AG04449 (cell line): ENCODE measurements at regions of chr7 and their contacts with region 1.

Region 1: DNA sequence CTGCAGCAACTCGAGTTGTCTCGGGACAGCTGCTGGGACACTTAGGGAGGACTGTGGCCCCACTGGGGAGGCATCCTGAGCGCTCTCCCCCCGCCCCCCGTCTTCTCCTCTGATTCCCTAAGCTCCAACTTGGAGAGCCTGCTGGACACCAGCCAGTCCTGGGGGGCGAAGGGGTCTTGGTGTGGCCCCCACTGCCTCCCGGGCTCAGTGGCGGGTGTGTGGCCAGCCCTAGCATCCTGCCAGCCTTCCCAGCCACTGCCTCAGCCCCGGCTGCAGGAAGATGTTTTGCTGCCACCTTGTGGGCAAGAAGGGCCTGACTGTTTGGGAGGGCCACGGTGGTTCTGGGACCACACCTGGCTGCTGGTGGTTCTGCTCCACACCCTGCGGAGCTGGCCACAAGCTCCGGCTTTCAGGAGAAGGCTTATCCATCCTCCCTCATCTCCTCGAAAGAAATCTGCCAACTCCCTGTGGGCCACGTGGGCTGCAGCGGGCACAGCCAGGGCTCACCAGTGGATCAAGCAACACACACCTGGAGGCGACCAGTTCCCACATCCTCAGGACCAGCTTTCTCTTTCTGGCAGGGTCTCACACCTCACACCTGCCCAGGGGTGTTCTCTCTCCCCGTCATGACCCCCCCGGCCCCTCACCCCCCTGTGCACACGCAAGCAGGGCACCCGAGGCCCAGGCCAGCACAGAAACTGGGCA is 24.8 kb downstream of the AGAP3 start:
- DNase-seq: no peak
- H3K4me3 ChIP-seq: no peak overlapping the region
- CTCF ChIP-seq: peak; percentile 94

Region 2: DNA sequence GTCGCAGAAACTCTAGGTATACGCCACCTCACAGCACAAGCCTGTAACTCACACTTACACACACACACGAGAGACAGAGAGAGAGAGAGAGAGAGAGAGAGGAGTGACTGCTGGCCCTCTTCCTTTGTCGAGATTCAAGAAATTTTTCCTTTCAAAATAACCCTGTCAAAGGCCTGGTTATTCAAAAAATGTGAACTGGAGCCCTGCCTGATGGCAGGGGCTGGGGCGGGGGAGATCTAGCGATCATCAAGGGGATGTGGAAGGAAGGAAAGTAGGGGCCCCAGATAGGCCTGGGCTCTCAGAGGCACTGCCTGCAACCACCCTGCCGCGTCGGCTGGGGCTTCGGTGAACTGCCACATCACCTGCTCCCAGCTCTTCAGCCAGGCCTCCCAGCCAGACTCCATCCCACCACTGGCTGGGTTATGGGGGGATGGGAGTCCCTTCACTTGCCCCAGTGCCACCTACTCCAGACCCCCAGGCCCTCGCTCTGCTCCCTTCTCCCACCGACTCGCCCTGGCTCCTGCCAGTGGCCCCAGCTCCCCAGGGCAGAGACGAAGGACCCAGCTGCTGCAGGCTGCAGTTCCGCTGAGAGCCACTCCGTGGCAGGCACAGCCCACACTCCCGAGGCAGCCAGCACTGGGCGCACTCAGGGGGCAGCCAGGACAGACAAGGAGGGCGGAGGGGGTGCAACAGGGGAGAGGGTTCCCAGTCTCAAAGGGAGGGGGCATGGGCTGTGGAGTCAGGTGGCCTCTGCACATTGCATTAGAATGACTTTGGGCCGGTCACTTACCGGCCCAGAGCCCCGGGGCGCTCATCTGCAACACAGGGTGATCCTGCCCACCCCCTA is 148.3 kb before region 1 on chr7:
- CTCF ChIA-PET with region 1: interaction called, 87 read pairs
- POLR2A ChIA-PET with region 1: interaction called, 3 read pairs
- DNase-seq: no peak
- H3K4me3 ChIP-seq: no peak overlapping the region
- CTCF ChIP-seq: peak; percentile 97

Region 3: DNA sequence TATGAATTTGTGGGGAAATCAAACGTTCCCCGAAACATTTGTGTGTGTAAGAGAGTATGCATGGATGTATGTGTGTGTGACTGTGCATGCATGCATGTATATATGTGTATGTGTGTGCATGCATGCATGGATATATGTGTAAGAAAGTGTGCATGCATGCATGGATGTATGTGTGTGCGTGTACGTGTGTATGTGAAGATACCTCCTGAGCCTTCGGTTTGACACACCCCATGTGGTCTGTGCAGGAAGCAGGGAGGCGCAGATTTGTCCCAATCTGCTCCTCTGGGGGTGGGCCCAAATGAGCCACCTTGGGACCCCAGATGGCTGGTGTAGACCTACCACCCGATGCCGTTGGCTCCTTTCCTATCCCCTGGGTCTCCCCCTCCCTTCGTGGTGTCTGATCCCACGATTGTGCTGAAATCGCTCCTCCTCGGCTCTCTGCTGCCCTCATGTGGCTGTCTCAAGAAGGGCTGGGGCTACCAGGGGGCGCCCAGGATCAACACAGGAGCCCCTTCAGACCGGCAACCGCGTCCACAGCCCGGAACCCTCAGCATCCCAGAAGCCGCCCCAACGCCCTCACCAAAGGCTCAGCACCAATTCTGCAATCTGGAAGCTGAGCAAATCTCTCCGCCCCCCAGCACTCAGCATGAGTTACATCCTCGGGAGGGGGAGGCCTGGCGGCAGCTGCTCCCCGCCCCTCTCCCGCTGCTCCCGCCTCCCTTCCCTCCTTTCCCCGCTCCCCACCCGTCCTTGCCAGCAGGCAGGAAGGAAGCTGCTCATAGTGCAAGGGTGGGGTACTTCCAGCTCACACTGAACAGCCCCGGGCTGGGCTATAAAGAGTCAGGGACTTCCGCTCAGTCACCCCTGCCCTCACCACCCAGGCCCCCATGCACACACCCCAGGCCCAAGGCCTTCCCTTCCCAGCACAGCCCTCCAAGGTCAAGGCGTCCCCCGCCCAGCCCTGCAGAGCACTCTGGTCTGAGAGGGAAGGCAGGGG is 122.6 kb before region 1 on chr7:
- CTCF ChIA-PET with region 1: interaction called, 21 read pairs
- POLR2A ChIA-PET with region 1: no interaction called
- DNase-seq: no peak
- H3K4me3 ChIP-seq: no peak overlapping the region
- CTCF ChIP-seq: peak; percentile 72

Region 4: DNA sequence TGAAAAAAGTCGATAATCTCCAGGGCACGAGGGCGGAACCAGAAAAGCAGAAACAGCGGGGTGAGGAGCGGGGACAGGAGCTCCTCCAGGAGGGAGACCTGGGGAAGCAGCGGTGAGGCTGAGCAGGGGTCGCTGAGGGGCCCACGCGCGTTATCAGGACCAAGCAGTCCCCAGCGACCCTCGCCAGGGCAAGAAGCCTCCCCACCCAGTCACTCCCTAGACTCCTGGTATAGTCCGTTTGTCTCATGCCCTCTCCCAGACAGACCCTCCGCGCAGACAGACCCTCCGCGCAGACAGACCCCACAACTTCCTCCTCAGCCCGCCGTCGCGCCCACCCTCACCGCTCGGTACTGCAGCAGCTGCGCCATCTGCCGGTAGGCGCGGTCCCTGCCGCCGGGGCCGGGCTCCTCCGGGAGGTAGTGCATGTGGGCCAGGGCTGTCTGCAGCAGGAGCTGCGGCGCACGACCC is 93.1 kb before region 1 on chr7:
- CTCF ChIA-PET with region 1: interaction called, 190 read pairs
- POLR2A ChIA-PET with region 1: interaction called, 3 read pairs
- DNase-seq: no peak
- H3K4me3 ChIP-seq: peak overlapping the region; percentile 47
- CTCF ChIP-seq: peak; percentile 100

Region 5: GRCh38 chr7:151038951-151039849 is 71.9 kb before region 1 on chr7:
- CTCF ChIA-PET with region 1: interaction called, 15 read pairs
- POLR2A ChIA-PET with region 1: interaction called, 3 read pairs
- DNase-seq: no peak
- H3K4me3 ChIP-seq: no peak overlapping the region
- CTCF ChIP-seq: no peak

Region 6: DNA sequence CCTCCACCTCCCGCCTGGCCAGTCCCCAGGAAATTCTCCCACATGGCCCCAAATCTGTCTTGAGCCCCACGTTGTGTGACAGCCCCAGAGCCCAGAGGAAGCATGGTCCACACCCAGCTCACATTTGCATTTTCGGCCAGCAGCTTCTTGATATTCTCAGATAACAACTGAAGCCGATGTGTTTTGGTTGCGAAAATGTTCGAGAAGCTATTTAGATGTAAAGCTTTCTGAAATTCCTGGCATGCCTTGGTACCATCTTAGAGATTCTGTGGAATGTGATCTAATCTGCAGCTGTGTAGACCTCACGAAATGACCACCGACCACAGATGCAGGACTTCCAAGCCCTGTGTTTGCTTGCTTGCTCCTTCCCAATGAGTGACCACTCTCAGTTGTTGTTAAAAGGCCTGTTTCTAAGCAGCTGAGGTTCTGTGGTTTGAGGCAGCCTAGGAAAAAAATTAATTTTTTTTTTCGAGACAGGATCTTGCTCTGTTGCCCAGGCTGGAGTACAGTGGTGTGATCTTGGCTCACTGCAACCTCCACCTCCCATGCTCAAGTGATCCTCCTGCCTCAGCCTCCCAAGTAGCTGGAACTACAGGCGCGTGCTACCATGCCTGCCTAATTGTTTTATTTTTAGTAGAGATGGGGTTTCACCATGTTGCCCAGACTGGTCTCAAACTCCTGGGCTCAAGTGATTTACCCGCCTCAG is 42.9 kb before region 1 on chr7:
- CTCF ChIA-PET with region 1: interaction called, 48 read pairs
- POLR2A ChIA-PET with region 1: no interaction called
- DNase-seq: peak; percentile 36
- H3K4me3 ChIP-seq: no peak overlapping the region
- CTCF ChIP-seq: no peak

Region 7: GRCh38 chr7:151123822-151124464 is 12.8 kb after region 1 on chr7:
- CTCF ChIA-PET with region 1: interaction called, 85 read pairs
- POLR2A ChIA-PET with region 1: interaction called, 3 read pairs
- DNase-seq: no peak
- H3K4me3 ChIP-seq: no peak overlapping the region
- CTCF ChIP-seq: peak; percentile 100

Region 8: GRCh38 chr7:151187409-151188251 is 76.5 kb after region 1 on chr7:
- CTCF ChIA-PET with region 1: no interaction called
- POLR2A ChIA-PET with region 1: no interaction called
- DNase-seq: no peak
- H3K4me3 ChIP-seq: no peak overlapping the region
- CTCF ChIP-seq: no peak

Region 9: DNA sequence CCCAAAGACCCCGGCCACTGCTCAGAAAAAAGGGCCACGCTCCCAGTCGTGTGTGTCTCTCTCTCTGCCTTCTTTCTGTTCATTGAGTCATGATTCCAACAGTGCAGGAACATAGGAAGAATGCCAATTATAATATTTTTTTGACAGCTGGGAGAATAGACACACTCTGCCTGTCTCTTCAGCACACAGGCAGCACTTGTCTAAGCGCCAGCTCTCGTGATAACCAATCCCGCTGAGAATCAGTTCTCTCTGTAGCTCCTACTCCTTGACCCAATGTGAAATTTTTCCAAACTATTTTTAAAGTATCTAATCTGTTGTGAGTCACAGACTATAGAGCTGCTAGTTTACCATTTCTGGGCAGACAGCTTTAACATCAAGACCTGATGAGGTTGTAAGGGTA is 554.3 kb after region 1 on chr7:
- CTCF ChIA-PET with region 1: no interaction called
- POLR2A ChIA-PET with region 1: no interaction called
- DNase-seq: peak; percentile 83
- H3K4me3 ChIP-seq: no peak overlapping the region
- CTCF ChIP-seq: no peak

Region 10: DNA sequence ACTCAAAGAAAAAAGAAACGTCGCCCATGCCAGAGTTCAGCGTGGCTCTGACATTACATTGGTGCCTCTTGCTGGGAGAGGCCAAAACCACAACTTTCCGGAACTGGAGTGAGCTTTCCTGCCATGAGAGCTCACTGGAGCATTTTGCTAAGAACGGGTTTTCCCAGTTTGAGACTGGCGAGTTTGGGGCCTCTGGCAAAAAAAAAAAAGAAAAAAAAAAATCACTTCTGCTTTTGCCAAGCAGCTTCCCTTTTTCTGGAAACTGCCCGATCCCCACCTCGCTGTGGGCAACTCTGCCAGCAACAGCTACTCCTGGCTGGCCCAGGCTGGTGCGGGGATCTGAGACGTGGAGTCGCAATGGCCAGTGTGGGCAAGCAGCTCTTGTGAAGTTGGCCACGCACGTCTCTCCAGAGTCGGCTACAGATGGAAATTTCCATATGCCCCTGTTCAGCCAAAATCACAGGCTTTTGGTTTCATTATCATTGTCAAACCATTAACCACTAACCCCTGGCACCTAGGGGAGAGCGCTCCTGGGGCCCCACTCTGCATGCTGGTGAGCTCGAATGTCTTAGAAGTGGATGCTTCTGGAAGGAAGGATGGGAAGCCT is 740.2 kb after region 1 on chr7:
- CTCF ChIA-PET with region 1: no interaction called
- POLR2A ChIA-PET with region 1: no interaction called
- DNase-seq: no peak
- H3K4me3 ChIP-seq: no peak overlapping the region
- CTCF ChIP-seq: no peak